CD4-positive, alpha-beta memory T cell (primary cell): ENCODE measurements at regions of chr1 and their contacts with region 1.

Region 1: GRCh38 chr1:236451796-236452373 is 57.8 kb downstream of the EDARADD start:
- DNase-seq: peak in 4 of 5 donors; percentile 40 to 52 (median 47)
- H3K4me3 ChIP-seq: no peak overlapping the region
- H3K4me3 Mint-ChIP-seq: no peak overlapping the region
- H3K27ac ChIP-seq: no peak overlapping the region
- H3K27ac Mint-ChIP-seq: peak overlapping the region in 1 of 7 donors; percentile 47
- H3K4me1 ChIP-seq: peaks cover 7% of the 10 kb centered on the region
- H3K4me1 Mint-ChIP-seq: peaks cover 9 to 15% (median 12%) of the 10 kb centered on the region in 4 donors
- H3K27me3 ChIP-seq: no peaks in the 10 kb centered on the region
- H3K27me3 Mint-ChIP-seq: peaks cover 0 to 1% of the 10 kb centered on the region in 2 donors

Region 2: DNA sequence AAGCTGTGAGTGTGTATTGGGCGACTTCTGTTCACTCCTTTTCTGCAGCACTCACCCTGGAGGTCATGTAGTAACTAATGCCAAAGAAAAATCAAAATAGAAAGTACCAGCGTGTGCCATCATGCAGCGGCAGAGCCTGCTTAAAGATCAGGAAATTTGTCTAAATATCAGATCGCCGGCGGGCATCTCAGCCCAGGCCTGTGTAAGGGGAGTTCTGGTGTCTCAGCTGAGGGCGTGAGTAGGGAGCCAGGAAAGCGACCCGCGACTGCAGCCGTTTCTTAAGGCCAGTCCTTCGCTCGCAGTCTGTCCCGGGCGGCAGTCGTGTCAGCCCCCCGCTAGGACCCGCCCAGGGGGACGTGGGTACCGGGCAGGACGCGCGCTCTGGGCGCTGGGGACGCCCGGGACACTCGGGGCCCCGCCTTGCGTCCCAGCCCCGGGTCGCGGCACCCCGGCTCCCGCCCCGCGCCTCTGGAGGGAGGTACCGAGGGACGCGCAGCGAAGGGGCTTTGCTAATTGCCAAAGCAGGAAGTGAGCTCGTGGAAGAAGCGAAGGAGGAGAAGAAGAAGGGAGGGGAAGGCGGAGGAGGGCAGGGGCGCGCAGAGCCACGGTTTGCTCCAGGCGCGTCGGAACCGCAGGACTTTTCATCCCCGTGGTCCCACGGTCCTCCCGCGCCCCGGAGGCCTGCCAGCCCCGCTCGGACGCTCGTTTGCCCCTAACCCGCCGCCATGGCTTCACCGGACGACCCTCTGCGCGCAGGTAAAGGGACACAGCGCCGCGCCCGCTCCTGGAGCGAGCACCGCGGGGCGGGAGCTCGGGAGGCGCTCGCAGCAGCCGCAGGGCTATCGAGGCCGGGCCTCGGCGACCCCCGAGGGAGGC is 56.7 kb before region 1 on chr1:
- CTCF ChIA-PET with region 1: interaction called, 15 read pairs
- POLR2A ChIA-PET with region 1: interaction called, 5 read pairs
- intact Hi-C with region 1: loop called (anchors 1 kb)
- DNase-seq: peak; percentile 56 to 68 (median 60)
- H3K4me3 ChIP-seq: peak overlapping the region; percentile 47 to 71
- H3K4me3 Mint-ChIP-seq: peak overlapping the region; percentile 89 to 96 (median 93)
- H3K27ac ChIP-seq: peak overlapping the region; percentile 67
- H3K27ac Mint-ChIP-seq: peak overlapping the region; percentile 68 to 95 (median 86)
- H3K4me1 ChIP-seq: peaks cover 20% of the 10 kb centered on the region
- H3K4me1 Mint-ChIP-seq: peaks cover 19 to 51% (median 34%) of the 10 kb centered on the region in 4 donors
- H3K27me3 ChIP-seq: no peaks in the 10 kb centered on the region
- H3K27me3 Mint-ChIP-seq: peaks cover 4 to 17% of the 10 kb centered on the region in 2 donors

Region 3: GRCh38 chr1:236440373-236440772 is 11.5 kb before region 1 on chr1:
- CTCF ChIA-PET with region 1: interaction called, 10 read pairs
- POLR2A ChIA-PET with region 1: no interaction called
- intact Hi-C with region 1: no loop called
- DNase-seq: no peak
- H3K4me3 ChIP-seq: no peak overlapping the region
- H3K4me3 Mint-ChIP-seq: no peak overlapping the region
- H3K27ac ChIP-seq: no peak overlapping the region
- H3K27ac Mint-ChIP-seq: no peak overlapping the region
- H3K4me1 ChIP-seq: no peaks in the 10 kb centered on the region
- H3K4me1 Mint-ChIP-seq: peaks cover 0 to 2% (median 0%) of the 10 kb centered on the region in 4 donors
- H3K27me3 ChIP-seq: no peaks in the 10 kb centered on the region
- H3K27me3 Mint-ChIP-seq: no peaks in the 10 kb centered on the region

Region 4: DNA sequence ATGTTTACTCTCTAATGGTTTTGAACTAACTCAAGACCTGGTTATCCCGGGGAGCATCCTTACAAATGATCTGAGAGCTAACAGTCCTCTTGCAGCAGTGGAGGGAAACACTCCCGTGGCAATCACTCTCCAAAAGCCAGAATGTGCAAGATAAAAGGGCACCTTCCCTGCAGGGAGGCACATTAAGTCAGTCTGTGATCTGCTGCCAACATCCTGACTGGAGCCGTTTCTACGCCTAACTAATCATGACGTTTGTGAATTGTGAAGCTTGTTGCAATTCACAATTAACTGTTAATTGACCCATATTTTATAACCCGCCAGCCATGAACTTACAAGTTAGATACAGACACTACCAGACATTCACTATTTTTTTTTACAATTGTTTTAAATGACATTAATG is 19.8 kb after region 1 on chr1:
- CTCF ChIA-PET with region 1: interaction called, 17 read pairs
- POLR2A ChIA-PET with region 1: no interaction called
- intact Hi-C with region 1: no loop called
- DNase-seq: no peak
- H3K4me3 ChIP-seq: no peak overlapping the region
- H3K4me3 Mint-ChIP-seq: no peak overlapping the region
- H3K27ac ChIP-seq: no peak overlapping the region
- H3K27ac Mint-ChIP-seq: no peak overlapping the region
- H3K4me1 ChIP-seq: peaks cover under 1% of the 10 kb centered on the region
- H3K4me1 Mint-ChIP-seq: peaks cover 0 to 5% (median under 1%) of the 10 kb centered on the region in 4 donors
- H3K27me3 ChIP-seq: no peaks in the 10 kb centered on the region
- H3K27me3 Mint-ChIP-seq: peaks cover 0 to 10% of the 10 kb centered on the region in 2 donors

Region 5: DNA sequence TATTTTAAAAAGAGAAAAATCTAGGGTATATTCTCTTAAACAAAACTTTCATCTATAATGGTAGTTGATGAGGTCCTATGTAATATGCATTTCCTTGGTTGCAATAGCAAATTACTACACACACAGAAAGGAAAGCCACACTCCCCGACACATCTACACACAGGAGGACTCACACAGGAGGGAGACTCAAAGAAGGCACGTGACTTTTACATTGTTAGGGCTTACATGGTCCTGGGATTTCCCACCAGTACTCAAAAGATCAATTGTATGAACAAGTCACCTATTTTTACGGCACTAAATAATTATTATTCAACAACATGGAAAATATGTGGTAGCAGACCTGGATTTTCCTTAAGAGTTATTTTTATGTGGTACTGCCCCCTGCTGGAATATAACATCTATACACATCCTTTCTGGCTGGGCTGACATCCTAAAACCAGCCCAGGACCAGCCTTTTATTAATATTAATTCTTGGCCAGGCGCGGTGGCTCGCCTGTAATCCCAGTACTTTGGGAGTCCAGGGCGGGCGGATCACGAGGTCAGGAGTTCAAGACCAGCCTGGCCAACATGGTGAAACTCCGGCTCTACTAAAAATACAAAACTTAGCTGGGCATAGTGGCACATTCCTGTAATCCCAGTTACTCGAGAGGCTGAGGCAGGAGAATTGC is 38.0 kb after region 1 on chr1:
- CTCF ChIA-PET with region 1: interaction called, 5 read pairs
- POLR2A ChIA-PET with region 1: interaction called, 3 read pairs
- intact Hi-C with region 1: loop called (anchors 5 kb)
- DNase-seq: peak in 4 of 5 donors; percentile 43 to 50 (median 44)
- H3K4me3 ChIP-seq: no peak overlapping the region
- H3K4me3 Mint-ChIP-seq: no peak overlapping the region
- H3K27ac ChIP-seq: no peak overlapping the region
- H3K27ac Mint-ChIP-seq: no peak overlapping the region
- H3K4me1 ChIP-seq: no peaks in the 10 kb centered on the region
- H3K4me1 Mint-ChIP-seq: peaks cover 13 to 22% (median 16%) of the 10 kb centered on the region in 4 donors
- H3K27me3 ChIP-seq: no peaks in the 10 kb centered on the region
- H3K27me3 Mint-ChIP-seq: peaks cover 2 to 3% of the 10 kb centered on the region in 2 donors